ENCODE measurements at regions of chr2 and their contacts with region 1.

Region 1: DNA sequence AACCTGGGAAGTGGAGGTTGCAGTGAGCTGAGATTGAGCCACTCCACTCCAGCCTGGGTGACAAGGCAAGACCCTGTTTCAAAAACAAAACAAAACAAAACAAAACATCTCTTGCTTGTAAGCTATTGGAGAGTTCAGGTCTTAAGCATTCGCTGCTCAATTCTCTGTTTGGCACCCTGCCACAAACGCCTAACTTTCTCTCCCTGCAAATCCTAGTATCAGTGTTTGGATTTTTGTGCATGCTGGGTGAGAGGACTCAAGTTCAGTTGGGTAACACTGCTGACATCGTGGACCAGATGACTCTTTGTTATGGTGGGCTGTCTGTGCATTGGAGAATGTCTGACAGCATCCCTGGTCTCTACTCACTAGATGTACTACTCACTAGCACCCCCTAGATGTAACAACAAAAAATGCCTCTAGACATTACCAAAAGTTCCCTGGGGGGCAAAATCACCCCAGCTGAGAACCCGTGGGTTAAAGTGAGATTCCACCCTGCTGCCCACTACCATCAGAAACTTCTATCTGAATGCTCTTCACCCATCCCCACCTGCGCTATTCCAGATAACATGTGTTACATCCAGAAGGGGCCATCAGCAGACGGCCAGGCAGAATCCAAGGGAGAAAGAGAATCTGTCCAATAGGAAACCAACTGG is 50.9 kb downstream of the CACNB4 start:
- DNase-seq: no peak
- ATAC-seq: no peak
- H3K4me3 ChIP-seq: no peak overlapping the region
- H3K27ac ChIP-seq: no peak overlapping the region
- H3K4me1 ChIP-seq: no peaks in the 10 kb centered on the region
- H3K27me3 ChIP-seq: no peaks in the 10 kb centered on the region
- CTCF ChIP-seq: peak in 1 of 7 experiments; percentile 22
- POLR2A ChIP-seq: no peak

Region 2: GRCh38 chr2:152635635-152636298 is 587.8 kb after region 1 on chr2:
- intact Hi-C with region 1: loop called (anchors 10 kb)
- DNase-seq: peak; percentile 67 to 74 (median 68)
- ATAC-seq: peak; percentile 85
- H3K4me3 ChIP-seq: no peak overlapping the region
- H3K27ac ChIP-seq: no peak overlapping the region
- H3K4me1 ChIP-seq: no peaks in the 10 kb centered on the region
- H3K27me3 ChIP-seq: no peaks in the 10 kb centered on the region
- CTCF ChIP-seq: peak; percentile 58 to 82 (median 78)
- POLR2A ChIP-seq: no peak